Activated CD4-positive, alpha-beta T cell treated with anti-CD3 and anti-CD28 coated beads, Interleukin-2, amount 10 ng/mL, durations not matched to agents 24 days and 14 days (primary cell): ENCODE measurements at regions of chr10 and their contacts with region 1.

Region 1: GRCh38 chr10:102394079-102394800 is 1.3 kb upstream of the NFKB2 start:
- DNase-seq: peak; percentile 100
- H3K4me3 Mint-ChIP-seq: peak overlapping the region; percentile 90
- H3K27ac Mint-ChIP-seq: peak overlapping the region; percentile 100
- H3K4me1 Mint-ChIP-seq: peaks cover 41% of the 10 kb centered on the region
- H3K27me3 Mint-ChIP-seq: peaks cover 3% of the 10 kb centered on the region

Region 2: DNA sequence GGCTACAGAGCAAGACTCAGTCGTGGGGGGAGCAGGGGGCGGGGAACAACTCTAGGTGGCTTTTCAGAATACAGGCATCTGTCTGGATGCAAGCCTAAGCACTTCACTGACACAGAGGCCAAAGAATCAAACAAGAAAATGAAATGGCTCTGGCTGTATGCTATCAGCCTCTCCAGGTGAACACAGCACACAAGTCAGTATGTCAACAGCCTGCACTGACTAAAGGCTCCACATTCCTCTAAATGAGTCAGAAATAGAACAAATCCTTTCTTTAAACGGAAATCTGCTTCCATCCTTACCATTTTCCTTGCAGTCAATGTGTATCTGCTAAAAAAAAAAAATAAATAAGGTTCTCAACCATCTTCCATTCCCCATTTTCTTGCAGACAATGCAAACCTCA is 426.5 kb before region 1 on chr10:
- intact Hi-C with region 1: no loop called
- DNase-seq: no peak
- H3K4me3 Mint-ChIP-seq: no peak overlapping the region
- H3K27ac Mint-ChIP-seq: no peak overlapping the region
- H3K4me1 Mint-ChIP-seq: peaks cover 24% of the 10 kb centered on the region
- H3K27me3 Mint-ChIP-seq: no peaks in the 10 kb centered on the region

Region 3: DNA sequence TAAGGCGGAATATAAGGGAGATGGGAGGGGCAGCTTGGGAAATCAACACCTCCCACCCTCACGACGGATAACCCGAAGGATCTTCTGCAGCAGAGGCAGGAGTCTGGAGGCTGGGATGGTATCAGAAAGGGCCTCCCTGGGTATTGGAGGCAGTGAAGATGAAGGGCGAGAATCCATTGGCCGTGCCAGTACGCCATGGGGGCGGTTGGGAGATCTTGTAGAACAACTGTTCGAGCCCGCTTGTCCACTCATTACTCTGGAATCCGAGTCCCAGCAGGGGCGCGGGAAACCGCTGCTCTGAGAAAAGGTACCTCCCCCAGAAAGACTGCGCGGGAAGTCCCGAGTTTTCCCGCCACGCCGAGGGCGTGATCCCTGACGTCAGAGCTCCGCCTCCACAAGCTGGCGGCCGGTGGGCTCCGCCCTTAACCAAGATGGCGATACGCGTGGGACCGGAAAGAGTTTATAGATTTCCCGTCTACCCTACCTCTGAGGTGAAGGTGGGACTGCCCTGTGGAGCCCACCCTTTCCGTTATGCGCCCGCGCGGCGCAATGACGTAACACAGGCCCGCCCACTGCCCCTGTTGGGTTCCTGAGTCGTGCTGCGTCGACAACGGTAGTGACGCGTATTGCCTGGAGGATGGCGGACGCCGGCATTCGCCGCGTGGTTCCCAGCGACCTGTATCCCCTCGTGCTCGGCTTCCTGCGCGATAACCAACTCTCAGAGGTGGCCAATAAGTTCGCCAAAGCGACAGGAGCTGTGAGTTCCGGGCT is 242.3 kb before region 1 on chr10 and contains the start of gene NOLC1:
- intact Hi-C with region 1: loop called (anchors 1 kb)
- DNase-seq: peak; percentile 100
- H3K4me3 Mint-ChIP-seq: peak within 1 kb of the TSS; percentile 99
- H3K27ac Mint-ChIP-seq: peak within 1 kb of the TSS; percentile 99
- H3K4me1 Mint-ChIP-seq: peaks cover 45% of the 10 kb centered on the region
- H3K27me3 Mint-ChIP-seq: peaks cover 2% of the 10 kb centered on the region
- total RNA-seq, gene NOLC1: 268 and 281 TPM in 2 replicates

Region 4: DNA sequence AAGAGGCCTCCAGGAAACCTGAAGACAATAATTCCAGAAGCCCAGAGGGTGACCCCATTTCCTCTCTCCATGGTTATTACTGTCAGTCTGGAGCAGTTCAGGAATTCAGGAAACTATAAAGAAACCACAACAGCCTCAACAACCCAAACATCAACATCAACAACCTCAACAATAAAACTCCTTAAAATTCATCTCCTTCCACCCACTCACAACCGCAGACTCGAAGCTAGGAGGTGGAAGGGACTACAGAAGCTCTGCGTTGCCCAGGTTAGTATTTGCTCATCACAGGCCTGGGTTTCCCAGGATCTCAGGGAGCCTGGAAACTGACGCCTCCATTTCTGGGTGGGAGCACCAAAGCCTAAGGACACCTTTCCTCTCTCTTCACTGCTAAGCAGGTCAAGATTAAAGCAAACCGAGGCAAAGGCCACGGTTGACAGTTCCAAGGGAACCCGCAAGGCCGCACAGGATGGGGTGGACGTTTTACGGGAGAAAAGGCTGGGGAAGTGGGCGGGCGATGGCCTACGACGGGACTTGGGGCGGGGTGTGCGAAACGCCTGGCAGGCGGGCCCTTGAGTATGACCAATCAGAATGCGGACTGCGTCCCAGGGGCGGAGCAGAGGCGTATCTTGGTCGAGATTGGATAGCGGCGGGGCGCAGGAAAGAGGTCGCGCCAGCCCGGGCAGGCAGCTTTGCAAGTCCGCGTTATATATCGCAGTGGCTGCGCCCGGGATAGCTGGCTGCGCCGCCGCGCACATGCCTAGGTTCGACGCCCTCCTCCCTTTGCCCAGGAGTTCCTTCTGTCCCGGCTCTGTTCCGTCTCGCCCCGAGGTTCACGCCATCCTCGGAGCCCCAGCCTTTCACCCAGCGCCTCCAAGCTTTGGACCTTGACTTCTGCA is 168.3 kb before region 1 on chr10 and contains the start of gene ELOVL3:
- intact Hi-C with region 1: loop called (anchors 1 kb)
- DNase-seq: peak; percentile 96
- H3K4me3 Mint-ChIP-seq: peak within 1 kb of the TSS; percentile 56
- H3K27ac Mint-ChIP-seq: peak within 1 kb of the TSS; percentile 38
- H3K4me1 Mint-ChIP-seq: peaks cover 17% of the 10 kb centered on the region
- H3K27me3 Mint-ChIP-seq: peaks cover 57% of the 10 kb centered on the region
- total RNA-seq, gene ELOVL3: 0.14 TPM in 1 of 2 replicates, not detected in the other

Region 5: DNA sequence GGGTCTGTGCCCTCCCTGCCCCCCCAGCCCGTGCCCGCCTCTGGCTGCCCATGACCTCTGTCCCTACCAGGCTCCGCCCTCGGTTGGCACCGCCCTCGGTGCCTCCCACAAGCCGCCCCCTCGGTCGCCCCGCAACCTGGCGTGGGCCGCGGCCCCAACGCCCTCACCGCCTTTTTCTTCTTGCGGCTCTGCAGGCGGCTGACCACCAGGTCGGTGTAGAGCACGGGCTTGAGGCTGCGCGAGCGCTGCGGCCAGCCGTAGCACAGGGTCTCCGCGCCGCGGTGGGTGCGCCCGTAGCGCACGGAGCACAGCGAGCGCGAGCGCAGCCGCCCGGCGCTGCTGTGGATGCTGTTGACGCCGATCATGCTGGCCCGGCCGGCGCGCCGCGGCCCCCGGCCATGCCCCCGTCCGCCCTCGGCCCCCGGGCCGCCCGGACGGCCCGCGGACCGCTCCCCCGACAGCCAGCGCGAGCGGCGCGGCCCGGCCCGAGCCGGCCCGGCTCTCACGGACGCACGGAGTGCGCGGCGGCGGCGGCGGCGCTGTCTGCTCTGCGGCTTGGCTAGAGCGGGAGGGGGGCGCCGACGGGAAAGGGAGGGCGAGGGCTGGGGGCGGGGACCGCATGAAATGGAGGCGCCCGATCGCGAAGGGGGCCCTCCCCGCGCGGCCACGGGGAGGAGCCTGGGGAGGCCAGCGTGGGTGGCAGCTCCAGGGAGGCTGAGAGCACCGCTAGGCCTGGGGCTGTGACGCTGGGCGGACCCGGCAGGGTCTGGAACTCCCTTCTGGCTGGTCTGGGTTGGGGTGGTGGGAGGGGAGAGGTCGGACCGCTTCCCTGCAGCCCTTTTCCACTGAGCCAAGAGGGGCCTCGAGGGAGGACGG is 14.7 kb after region 1 on chr10:
- intact Hi-C with region 1: loop called (anchors 1 kb)
- DNase-seq: peak; percentile 91
- H3K4me3 Mint-ChIP-seq: peak overlapping the region; percentile 94
- H3K27ac Mint-ChIP-seq: peak overlapping the region; percentile 89
- H3K4me1 Mint-ChIP-seq: peaks cover 43% of the 10 kb centered on the region
- H3K27me3 Mint-ChIP-seq: peaks cover 23% of the 10 kb centered on the region

Region 6: GRCh38 chr10:102432162-102432950 is 38.1 kb after region 1 on chr10 and contains the start of gene CUEDC2:
- intact Hi-C with region 1: loop called (anchors 1 kb)
- DNase-seq: peak; percentile 100
- H3K4me3 Mint-ChIP-seq: peak within 1 kb of the TSS; percentile 85
- H3K27ac Mint-ChIP-seq: peak within 1 kb of the TSS; percentile 81
- H3K4me1 Mint-ChIP-seq: peaks cover 48% of the 10 kb centered on the region
- H3K27me3 Mint-ChIP-seq: no peaks in the 10 kb centered on the region
- total RNA-seq, gene CUEDC2: 64.2 and 67.6 TPM in 2 replicates

Region 7: DNA sequence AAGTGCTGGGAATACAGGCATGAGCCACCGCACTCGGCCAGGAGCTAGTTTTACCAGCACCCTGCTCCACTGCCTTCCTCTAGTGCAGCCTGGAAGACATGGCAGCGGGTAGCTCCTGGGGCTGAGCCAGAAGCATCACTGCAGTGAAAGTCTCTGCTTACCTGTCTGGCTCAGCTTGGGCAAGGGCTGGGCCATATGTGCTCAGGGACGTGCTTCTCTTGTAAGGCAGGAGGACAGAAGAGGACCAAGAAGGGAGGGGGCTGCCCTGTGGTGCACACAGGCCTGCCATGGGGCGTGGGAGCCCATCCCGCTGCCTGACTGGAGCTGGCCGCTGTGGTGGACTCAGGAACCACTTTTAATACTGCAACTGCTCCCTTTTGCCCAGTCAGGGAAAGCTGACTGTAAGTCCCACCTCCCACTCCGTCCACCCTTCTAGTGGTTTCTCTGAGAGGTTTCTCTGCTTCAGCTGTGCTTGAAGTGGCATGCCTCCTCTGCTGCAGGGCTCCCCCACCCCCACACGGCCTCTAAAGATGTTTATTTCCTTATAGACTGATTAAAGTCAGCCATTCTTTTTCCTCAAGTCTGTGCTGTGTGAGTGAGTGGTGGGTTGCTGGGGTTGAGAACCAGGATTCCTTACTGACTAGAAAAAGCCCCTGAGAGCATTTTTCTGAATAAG is 82.4 kb after region 1 on chr10:
- intact Hi-C with region 1: loop called (anchors 1 kb)
- DNase-seq: no peak
- H3K4me3 Mint-ChIP-seq: no peak overlapping the region
- H3K27ac Mint-ChIP-seq: peak overlapping the region; percentile 70
- H3K4me1 Mint-ChIP-seq: peaks cover 22% of the 10 kb centered on the region
- H3K27me3 Mint-ChIP-seq: no peaks in the 10 kb centered on the region

Region 8: GRCh38 chr10:102641880-102642735 is 247.9 kb after region 1 on chr10:
- intact Hi-C with region 1: loop called (anchors 1 kb)
- DNase-seq: peak; percentile 99
- H3K4me3 Mint-ChIP-seq: peak overlapping the region; percentile 92
- H3K27ac Mint-ChIP-seq: peak overlapping the region; percentile 92
- H3K4me1 Mint-ChIP-seq: peaks cover 18% of the 10 kb centered on the region
- H3K27me3 Mint-ChIP-seq: no peaks in the 10 kb centered on the region